Activated B cell treated with CpG ODN at 0.5 μM for 24 hours (primary cell): ENCODE measurements at regions of chr13 and their contacts with region 1.

Region 1: DNA sequence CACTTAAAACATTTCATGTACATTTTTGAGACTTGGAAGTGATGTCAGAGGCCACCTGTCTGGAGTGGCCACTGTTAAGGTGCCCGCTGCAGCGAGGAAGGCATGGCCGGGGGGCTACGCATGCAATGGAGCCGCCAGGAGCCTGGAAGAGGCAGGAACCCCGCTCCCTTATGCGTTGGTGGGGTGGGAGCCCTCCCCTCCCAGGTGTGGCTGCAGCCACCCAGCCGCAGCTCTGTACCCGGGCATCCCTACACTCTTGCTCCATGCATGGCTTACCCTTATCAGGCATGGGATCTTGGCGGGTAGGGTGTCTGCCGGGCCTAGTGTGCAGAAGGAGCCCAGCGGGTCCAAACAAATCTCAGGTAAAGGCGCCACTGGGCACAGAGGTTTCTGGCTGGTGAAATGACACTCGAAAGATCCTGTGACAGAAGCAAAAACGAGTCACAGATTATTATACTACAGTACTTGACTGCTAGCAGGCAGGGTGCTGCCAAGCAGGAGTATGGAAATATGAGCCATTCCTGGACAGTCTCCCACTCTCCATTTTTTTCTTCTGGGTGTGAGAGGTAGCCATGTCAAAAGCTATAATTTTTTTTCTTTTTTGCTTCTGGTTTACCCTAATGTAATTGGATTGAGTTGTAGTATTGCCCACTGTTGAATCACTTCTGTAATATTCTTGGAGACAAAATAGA is 1606.3 kb upstream of the MIR17HG start:
- DNase-seq: no peak
- ATAC-seq: no peak
- H3K4me3 Mint-ChIP-seq: no peak overlapping the region
- H3K27ac Mint-ChIP-seq: no peak overlapping the region
- H3K4me1 Mint-ChIP-seq: no peaks in the 10 kb centered on the region
- H3K27me3 Mint-ChIP-seq: no peaks in the 10 kb centered on the region
- CTCF ChIP-seq: no peak

Region 2: GRCh38 chr13:87942205-87942604 is 1798.9 kb before region 1 on chr13:
- CTCF ChIA-PET with region 1: no interaction called
- POLR2A ChIA-PET with region 1: no interaction called
- intact Hi-C with region 1: loop called (anchors 10 kb)
- DNase-seq: no peak
- ATAC-seq: no peak
- H3K4me3 Mint-ChIP-seq: no peak overlapping the region
- H3K27ac Mint-ChIP-seq: no peak overlapping the region
- H3K4me1 Mint-ChIP-seq: no peaks in the 10 kb centered on the region
- H3K27me3 Mint-ChIP-seq: no peaks in the 10 kb centered on the region
- CTCF ChIP-seq: no peak

Region 3: GRCh38 chr13:89812856-89813255 is 71.7 kb after region 1 on chr13:
- CTCF ChIA-PET with region 1: no interaction called
- POLR2A ChIA-PET with region 1: no interaction called
- intact Hi-C with region 1: no loop called
- DNase-seq: no peak
- ATAC-seq: no peak
- H3K4me3 Mint-ChIP-seq: no peak overlapping the region
- H3K27ac Mint-ChIP-seq: no peak overlapping the region
- H3K4me1 Mint-ChIP-seq: no peaks in the 10 kb centered on the region
- H3K27me3 Mint-ChIP-seq: no peaks in the 10 kb centered on the region
- CTCF ChIP-seq: no peak